Endothelial cell of umbilical vein (primary cell): ENCODE measurements at regions of chr14 and their contacts with region 1.

Region 1: DNA sequence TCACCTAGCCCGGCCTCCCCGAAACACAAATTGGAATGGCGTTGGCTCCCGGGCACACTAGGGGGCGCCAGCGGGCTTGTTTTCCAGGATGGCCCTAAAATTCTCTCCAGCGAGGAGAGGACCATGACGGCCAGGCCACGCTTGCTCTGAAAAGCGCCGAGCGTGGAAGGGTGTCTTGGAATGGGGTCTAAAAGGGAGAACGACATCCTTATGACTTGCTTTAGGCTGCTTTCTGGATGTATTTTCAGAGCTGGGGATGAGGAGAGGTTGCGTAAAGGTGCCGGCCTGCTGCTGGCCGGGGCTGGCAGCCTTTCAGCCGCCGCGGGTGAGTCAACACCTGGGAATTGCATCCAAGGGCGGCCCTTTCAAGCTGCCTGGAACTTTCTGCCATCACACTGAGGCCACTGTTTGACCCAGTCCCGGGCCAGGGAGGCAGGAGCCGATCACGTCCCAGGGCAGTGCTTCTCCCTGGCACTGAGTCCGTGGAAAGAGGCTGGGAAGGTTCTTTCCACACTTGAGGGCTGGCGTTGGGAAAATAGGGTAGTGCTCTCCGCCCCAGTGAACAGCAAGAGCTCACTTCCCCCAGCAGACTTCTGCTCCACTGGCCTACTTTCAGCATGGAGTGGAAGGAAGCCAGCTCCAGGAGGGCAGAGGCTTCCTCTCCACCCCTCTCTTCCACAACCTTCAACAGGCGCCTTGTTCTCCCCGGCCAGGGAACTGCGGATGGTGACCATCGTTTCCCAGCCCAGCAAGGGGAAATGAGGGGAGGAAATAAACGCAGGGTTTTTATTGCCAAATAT is 216.2 kb downstream of the TTC8 start:
- DNase-seq: peak; percentile 88
- H3K4me3 ChIP-seq: peak overlapping the region in 2 of 3 experiments; percentile 34 to 49
- H3K27ac ChIP-seq: peak overlapping the region; percentile 83
- H3K4me1 ChIP-seq: peaks cover 9% of the 10 kb centered on the region
- H3K27me3 ChIP-seq: peaks cover 0 to 9% of the 10 kb centered on the region in 2 experiments
- CTCF ChIP-seq: peak; percentile 96 to 99
- POLR2A ChIP-seq: no peak

Region 2: DNA sequence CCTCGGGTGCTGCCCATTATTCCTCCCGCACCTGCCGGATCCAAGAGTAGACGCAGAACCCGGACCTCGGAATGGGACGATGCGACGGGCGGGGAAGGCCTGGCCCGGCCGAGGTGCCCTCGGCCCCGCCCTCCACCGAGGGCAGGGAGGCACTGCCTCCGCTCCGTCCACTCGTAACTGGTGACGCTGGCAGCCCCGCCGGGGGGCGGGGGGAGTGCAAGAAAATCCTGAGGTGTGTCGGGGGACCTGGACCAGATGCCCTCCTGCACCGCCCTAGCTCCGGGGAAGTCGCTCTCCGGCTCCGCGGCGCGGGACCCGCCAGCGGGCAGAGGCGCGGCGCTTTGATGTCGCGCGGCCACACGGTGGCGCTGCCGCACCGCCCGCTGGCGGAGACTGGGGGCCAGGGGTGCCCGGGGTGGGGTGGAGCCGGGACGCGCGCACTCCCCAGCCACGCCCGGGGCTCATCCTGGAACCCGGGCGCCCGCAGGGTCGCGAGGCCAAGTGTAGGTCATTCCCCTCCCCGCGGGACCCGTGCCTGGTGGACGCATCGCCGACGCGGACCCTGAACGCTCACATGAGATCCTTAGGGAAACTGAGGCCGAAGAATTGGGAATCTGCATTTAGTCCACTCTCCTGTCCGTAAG is 13.4 kb before region 1 on chr14:
- CTCF ChIA-PET with region 1: interaction called, 48 read pairs
- POLR2A ChIA-PET with region 1: no interaction called
- dilution Hi-C with region 1: no loop called
- intact Hi-C with region 1: no loop called
- DNase-seq: peak; percentile 25
- H3K4me3 ChIP-seq: peak overlapping the region; percentile 40 to 65 (median 56)
- H3K27ac ChIP-seq: no peak overlapping the region
- H3K4me1 ChIP-seq: peaks cover 9% of the 10 kb centered on the region
- H3K27me3 ChIP-seq: peaks cover 25 to 39% of the 10 kb centered on the region in 2 experiments
- CTCF ChIP-seq: peak; percentile 74 to 88
- POLR2A ChIP-seq: no peak

Region 3: GRCh38 chr14:89240414-89240813 is 199.8 kb after region 1 on chr14:
- CTCF ChIA-PET with region 1: interaction called, 8 read pairs
- POLR2A ChIA-PET with region 1: no interaction called
- dilution Hi-C with region 1: no loop called
- intact Hi-C with region 1: loop called (anchors 2 kb)
- DNase-seq: peak; percentile 22
- H3K4me3 ChIP-seq: no peak overlapping the region
- H3K27ac ChIP-seq: peak overlapping the region; percentile 54
- H3K4me1 ChIP-seq: peaks cover 17% of the 10 kb centered on the region
- H3K27me3 ChIP-seq: no peaks in the 10 kb centered on the region
- CTCF ChIP-seq: no peak
- POLR2A ChIP-seq: no peak

Region 4: GRCh38 chr14:89701211-89702043 is 660.8 kb after region 1 on chr14:
- CTCF ChIA-PET with region 1: interaction called, 3 read pairs
- POLR2A ChIA-PET with region 1: no interaction called
- dilution Hi-C with region 1: no loop called
- intact Hi-C with region 1: loop called (anchors 2 kb)
- DNase-seq: peak; percentile 35
- H3K4me3 ChIP-seq: peak overlapping the region; percentile 15 to 54 (median 32)
- H3K27ac ChIP-seq: peak overlapping the region; percentile 27
- H3K4me1 ChIP-seq: peaks cover 3% of the 10 kb centered on the region
- H3K27me3 ChIP-seq: no peaks in the 10 kb centered on the region
- CTCF ChIP-seq: no peak
- POLR2A ChIP-seq: no peak

Region 5: DNA sequence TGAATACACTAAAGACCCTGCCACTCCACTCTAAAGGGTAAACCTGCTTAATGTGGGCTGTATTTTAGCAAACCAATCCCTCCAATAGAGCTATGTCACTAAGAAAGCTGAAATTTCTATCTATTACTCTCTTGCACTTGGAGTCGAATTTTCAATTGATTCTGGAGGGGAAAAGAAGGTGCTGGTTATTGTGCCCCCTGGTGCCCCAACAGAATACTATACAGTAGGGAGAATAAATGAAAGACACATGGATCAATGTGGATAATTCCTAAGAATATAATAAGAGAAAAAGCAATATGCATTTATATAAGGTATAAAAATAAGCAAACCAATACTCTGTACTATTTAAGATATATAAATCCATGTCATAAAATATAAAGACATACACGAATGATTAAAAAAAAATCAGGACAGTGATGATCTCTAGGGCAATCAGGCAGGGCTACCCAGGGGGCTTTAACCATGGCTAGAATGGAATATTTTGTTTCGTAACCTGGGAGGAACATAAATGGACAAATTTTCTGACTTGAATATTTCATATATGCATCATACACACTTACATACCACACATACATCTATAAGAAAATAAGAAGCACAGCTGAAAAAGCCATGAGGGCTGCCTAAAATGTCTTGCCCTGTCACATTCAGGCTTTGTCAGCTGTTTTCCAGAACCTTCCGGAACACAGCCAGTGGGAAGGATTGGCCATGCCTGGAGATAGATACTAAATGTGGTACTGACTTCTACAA is 859.4 kb after region 1 on chr14:
- CTCF ChIA-PET with region 1: interaction called, 22 read pairs
- POLR2A ChIA-PET with region 1: no interaction called
- dilution Hi-C with region 1: no loop called
- intact Hi-C with region 1: loop called (anchors 1 kb)
- DNase-seq: peak; percentile 35
- H3K4me3 ChIP-seq: no peak overlapping the region
- H3K27ac ChIP-seq: no peak overlapping the region
- H3K4me1 ChIP-seq: no peaks in the 10 kb centered on the region
- H3K27me3 ChIP-seq: no peaks in the 10 kb centered on the region
- CTCF ChIP-seq: peak; percentile 27 to 32
- POLR2A ChIP-seq: no peak

Region 6: DNA sequence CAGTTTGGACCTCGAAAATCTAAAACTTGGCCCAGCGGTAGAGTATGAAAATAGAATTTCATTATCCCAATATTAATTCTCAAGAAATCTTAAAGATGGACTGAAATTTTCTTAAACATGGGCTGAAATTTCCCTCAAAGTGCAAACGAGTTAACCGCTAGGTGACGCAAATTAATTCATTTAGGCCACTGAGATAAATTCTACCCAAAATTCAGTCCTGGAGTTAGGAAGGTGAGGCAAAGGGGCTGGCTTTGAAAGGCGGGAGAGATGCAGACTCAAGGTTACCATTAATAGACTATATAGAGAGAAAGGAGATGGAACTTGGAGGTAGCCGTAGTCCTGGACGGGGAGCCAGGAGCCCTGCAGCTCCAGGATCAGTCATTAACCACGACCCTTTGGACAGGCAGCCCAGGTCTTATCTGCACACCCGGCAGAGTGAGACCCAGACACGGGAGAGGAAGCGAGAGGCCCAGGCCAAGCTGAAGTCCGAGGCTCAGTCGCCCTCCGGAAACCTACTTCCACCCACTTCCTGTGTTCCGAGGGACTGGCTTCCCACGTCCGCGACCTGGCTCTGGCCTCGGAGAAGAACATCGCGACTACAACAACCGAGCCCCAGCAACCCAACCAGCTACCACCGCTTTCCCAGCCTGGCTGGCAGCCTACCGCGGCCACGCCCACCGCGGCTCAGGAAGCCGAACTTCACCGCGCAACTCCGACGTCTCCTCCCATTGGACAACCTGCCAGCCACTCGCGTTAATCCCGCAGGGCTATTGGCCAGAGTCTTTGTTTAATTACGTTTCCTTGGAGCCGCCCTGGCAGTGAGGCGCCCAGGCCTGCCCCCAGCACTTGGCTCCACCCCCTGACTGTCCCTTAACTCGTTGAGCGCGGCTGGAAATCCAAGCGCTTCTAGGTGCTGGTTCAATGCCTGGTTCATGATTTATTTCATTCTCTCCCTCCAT is 913.7 kb after region 1 on chr14 and contains the start of gene EFCAB11:
- CTCF ChIA-PET with region 1: interaction called, 5 read pairs
- POLR2A ChIA-PET with region 1: no interaction called
- dilution Hi-C with region 1: no loop called
- intact Hi-C with region 1: loop called (anchors 1 kb)
- DNase-seq: peak; percentile 100
- H3K4me3 ChIP-seq: peak within 1 kb of the TSS; percentile 39 to 73 (median 70)
- H3K27ac ChIP-seq: peak within 1 kb of the TSS; percentile 86
- H3K4me1 ChIP-seq: peaks cover 35% of the 10 kb centered on the region
- H3K27me3 ChIP-seq: no peaks in the 10 kb centered on the region
- CTCF ChIP-seq: peak; percentile 20 to 23
- POLR2A ChIP-seq: peak; percentile 87
- total RNA-seq, gene EFCAB11: 6.3 and 11.2 TPM in 2 replicates